GM12878 (cell line): ENCODE measurements at regions of chr5 and their contacts with region 1.

Region 1: GRCh38 chr5:78300464-78301045 is 6.1 kb upstream of the AP3B1 start:
- DNase-seq: no peak
- ATAC-seq: no peak
- H3K4me3 ChIP-seq: no peak overlapping the region
- H3K27ac ChIP-seq: no peak overlapping the region
- H3K4me1 ChIP-seq: no peaks in the 10 kb centered on the region
- H3K27me3 ChIP-seq: no peaks in the 10 kb centered on the region
- CTCF ChIP-seq: peak in 2 of 3 experiments; percentile 30 to 33; a peak in 3 of 6 replicates
- EP300 ChIP-seq: no peak
- POLR2A ChIP-seq: no peak
- RAD21 ChIP-seq: peak; percentile 46

Region 2: GRCh38 chr5:78288246-78288645 is 12.3 kb before region 1 on chr5:
- CTCF ChIA-PET with region 1: interaction called, 16 read pairs
- POLR2A ChIA-PET with region 1: no interaction called
- RAD21 ChIA-PET with region 1: no interaction called
- SMC1A ChIA-PET with region 1: interaction called, 6 read pairs
- in situ Hi-C with region 1: no loop called
- intact Hi-C with region 1: no loop called
- DNase-seq: no peak
- ATAC-seq: 0 out of 3 replicates have a peak, but pooled peaks have one; percentile 10
- H3K4me3 ChIP-seq: no peak overlapping the region
- H3K27ac ChIP-seq: no peak overlapping the region
- H3K4me1 ChIP-seq: no peaks in the 10 kb centered on the region
- H3K27me3 ChIP-seq: no peaks in the 10 kb centered on the region
- CTCF ChIP-seq: no peak
- EP300 ChIP-seq: no peak
- POLR2A ChIP-seq: no peak
- RAD21 ChIP-seq: no peak

Region 3: GRCh38 chr5:78339617-78340436 is 39.3 kb after region 1 on chr5:
- CTCF ChIA-PET with region 1: no interaction called
- POLR2A ChIA-PET with region 1: no interaction called
- RAD21 ChIA-PET with region 1: no interaction called
- SMC1A ChIA-PET with region 1: no interaction called
- in situ Hi-C with region 1: no loop called
- intact Hi-C with region 1: no loop called
- DNase-seq: no peak
- ATAC-seq: no peak
- H3K4me3 ChIP-seq: no peak overlapping the region
- H3K27ac ChIP-seq: no peak overlapping the region
- H3K4me1 ChIP-seq: no peaks in the 10 kb centered on the region
- H3K27me3 ChIP-seq: no peaks in the 10 kb centered on the region
- CTCF ChIP-seq: no peak
- EP300 ChIP-seq: no peak
- POLR2A ChIP-seq: no peak
- RAD21 ChIP-seq: no peak